Activated CD8-positive, alpha-beta T cell treated with anti-CD3 and anti-CD28 coated beads for 36 hours (primary cell): ENCODE measurements at regions of chr12 and their contacts with region 1.

Region 1: GRCh38 chr12:121637231-121637914 is 11.0 kb downstream of the ORAI1 start:
- DNase-seq: peak; percentile 89
- ATAC-seq: peak; percentile 91
- H3K4me3 Mint-ChIP-seq: peak overlapping the region; percentile 60
- H3K27ac Mint-ChIP-seq: peak overlapping the region; percentile 95
- H3K4me1 Mint-ChIP-seq: peaks cover 48% of the 10 kb centered on the region
- H3K27me3 Mint-ChIP-seq: no peaks in the 10 kb centered on the region
- CTCF ChIP-seq: no peak

Region 2: DNA sequence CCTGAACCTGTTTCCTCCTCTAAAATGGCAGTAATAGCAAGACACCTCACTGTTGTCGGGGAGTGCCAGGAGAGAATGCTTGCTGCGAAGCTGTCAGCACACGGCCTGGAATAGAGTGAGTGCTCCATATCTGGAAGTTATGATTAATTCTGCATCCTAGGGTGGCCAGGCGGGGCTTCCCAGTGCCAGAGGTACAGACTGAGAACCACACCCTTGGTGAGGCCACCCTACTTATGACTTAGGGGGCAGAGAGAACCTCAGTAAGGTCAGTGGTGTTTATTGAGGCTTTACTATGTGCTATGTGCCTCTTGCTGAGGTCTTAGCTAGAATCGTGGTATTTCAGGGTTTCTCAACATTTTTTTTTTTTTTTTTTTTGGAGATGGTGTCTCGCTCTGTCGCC is 12.0 kb after region 1 on chr12:
- CTCF ChIA-PET with region 1: interaction called, 5 read pairs
- POLR2A ChIA-PET with region 1: interaction called, 13 read pairs
- intact Hi-C with region 1: no loop called
- DNase-seq: no peak
- ATAC-seq: peak; percentile 25
- H3K4me3 Mint-ChIP-seq: no peak overlapping the region
- H3K27ac Mint-ChIP-seq: peak overlapping the region; percentile 58
- H3K4me1 Mint-ChIP-seq: peaks cover 24% of the 10 kb centered on the region
- H3K27me3 Mint-ChIP-seq: no peaks in the 10 kb centered on the region
- CTCF ChIP-seq: no peak

Region 3: GRCh38 chr12:121657305-121658008 is 20.1 kb after region 1 on chr12:
- CTCF ChIA-PET with region 1: interaction called, 5 read pairs
- POLR2A ChIA-PET with region 1: interaction called, 16 read pairs
- intact Hi-C with region 1: no loop called
- DNase-seq: peak; percentile 36
- ATAC-seq: peak; percentile 22
- H3K4me3 Mint-ChIP-seq: no peak overlapping the region
- H3K27ac Mint-ChIP-seq: peak overlapping the region; percentile 50
- H3K4me1 Mint-ChIP-seq: peaks cover 53% of the 10 kb centered on the region
- H3K27me3 Mint-ChIP-seq: no peaks in the 10 kb centered on the region
- CTCF ChIP-seq: no peak